ENCODE measurements at regions of chr1 and their contacts with region 1.

Region 1: DNA sequence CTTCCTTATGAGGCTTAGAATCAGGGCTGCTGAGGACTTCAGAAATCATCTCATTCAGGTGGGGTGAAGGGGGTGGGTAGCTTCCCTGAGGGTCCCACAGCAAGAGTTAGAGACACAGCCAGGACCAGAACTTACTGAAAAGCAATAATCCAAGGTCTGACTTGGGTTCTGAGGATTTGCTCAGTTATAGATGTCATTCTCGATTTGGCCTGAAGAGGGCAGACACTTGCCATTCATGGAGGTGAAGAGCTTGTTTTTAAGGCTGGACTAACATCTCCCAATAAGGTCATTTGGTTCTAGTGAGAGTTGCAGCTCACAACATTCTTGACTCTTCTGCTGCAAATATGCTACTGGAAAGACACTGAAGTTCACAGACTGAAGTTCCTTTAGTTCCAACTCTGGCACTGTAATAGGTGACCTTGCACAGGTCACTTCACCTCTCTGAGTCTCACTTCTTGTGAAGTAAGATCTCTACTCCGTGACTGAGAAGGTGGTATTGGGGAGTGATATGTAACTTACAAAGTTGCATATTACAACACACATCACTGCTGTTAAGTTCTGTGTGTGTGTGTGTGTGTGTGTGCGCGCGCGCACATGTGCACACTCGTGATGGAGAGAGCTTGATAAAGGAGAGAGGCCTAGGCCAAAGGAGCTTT is 69.8 kb upstream of the DIRAS3 start:
- DNase-seq: peak; percentile 85
- H3K4me3 ChIP-seq: no peak overlapping the region
- H3K27ac ChIP-seq: no peak overlapping the region
- H3K4me1 ChIP-seq: peaks cover 5% of the 10 kb centered on the region
- H3K27me3 ChIP-seq: no peaks in the 10 kb centered on the region
- CTCF ChIP-seq: peak; percentile 59 to 71
- POLR2A ChIP-seq: peak; percentile 26

Region 2: DNA sequence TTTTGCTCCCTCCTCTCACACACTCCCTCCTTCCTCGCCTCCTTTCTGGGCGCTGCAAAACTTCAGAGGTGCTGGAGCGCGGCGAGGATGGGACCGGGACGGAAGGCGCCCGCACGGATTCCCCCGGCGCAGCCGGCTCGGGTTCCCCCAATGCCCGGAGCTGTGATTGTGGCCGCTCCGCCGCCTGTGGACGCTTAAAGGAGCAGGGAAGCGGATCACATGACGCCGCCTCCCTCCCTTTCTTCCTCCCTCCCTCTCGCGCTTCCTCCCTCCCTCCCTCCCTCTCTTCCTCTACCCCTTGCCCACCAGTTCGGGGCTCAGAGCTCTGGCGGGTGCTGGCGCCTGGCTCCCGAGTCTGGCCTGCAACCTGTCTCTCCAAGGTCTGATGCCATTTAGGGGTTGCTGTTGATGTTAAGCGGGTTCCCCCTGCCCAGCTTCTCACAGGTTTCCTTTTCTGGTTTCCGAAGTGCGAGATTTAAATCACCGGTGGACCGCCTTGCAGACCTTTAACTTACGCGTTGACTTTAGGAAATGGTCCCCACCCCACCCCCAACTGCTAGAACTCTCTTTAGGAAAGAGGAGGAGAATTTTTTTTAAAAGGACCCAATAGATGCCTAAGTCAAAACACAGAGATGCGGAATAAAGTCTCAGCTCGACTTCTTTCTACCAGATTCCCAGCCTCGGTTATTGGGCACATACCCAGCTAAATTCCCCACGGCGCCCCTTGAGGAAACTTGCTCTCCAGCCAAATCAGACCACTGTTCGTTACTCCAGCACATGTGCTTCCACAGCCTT is 112.3 kb after region 1 on chr1 and contains the start of gene WLS:
- CTCF ChIA-PET with region 1: interaction called, 66 read pairs
- POLR2A ChIA-PET with region 1: interaction called, 7 read pairs
- dilution Hi-C with region 1: no loop called
- intact Hi-C with region 1: loop called (anchors 1 kb)
- DNase-seq: peak; percentile 80
- H3K4me3 ChIP-seq: peak within 1 kb of the TSS; percentile 67 to 100 (median 93)
- H3K27ac ChIP-seq: peak within 1 kb of the TSS; percentile 85
- H3K4me1 ChIP-seq: peaks cover 29% of the 10 kb centered on the region
- H3K27me3 ChIP-seq: no peaks in the 10 kb centered on the region
- CTCF ChIP-seq: peak; percentile 5 to 16
- POLR2A ChIP-seq: peak; percentile 98
- total RNA-seq, gene WLS: 163 and 199 TPM in 2 replicates

Region 3: DNA sequence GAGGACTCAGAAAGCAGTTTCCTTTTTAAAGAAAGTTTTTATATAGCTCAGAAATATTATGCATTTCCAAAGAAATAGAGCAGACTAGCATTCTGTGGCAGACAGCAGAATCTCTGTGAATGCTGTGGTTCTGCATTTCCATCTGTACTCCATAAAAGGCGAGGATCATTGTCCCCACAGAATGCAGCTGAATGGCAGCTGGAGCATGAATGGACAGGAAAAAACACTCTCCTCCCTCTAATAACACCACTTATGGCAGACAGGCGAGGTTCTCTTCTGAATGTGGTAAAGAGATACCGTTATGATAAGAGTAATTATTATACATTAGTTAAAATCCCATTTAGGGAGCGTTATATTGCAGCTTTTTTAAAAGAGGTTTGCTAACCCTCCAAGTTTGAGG is 193.5 kb after region 1 on chr1:
- CTCF ChIA-PET with region 1: interaction called, 267 read pairs
- POLR2A ChIA-PET with region 1: no interaction called
- dilution Hi-C with region 1: no loop called
- intact Hi-C with region 1: no loop called
- DNase-seq: peak; percentile 53
- H3K4me3 ChIP-seq: no peak overlapping the region
- H3K27ac ChIP-seq: no peak overlapping the region
- H3K4me1 ChIP-seq: peaks cover 15% of the 10 kb centered on the region
- H3K27me3 ChIP-seq: no peaks in the 10 kb centered on the region
- CTCF ChIP-seq: no peak
- POLR2A ChIP-seq: no peak

Region 4: GRCh38 chr1:68338081-68338480 is 217.8 kb after region 1 on chr1:
- CTCF ChIA-PET with region 1: interaction called, 312 read pairs
- POLR2A ChIA-PET with region 1: interaction called, 5 read pairs
- dilution Hi-C with region 1: loop called (anchors 25 kb)
- intact Hi-C with region 1: loop called (anchors 1 kb)
- DNase-seq: no peak
- H3K4me3 ChIP-seq: no peak overlapping the region
- H3K27ac ChIP-seq: no peak overlapping the region
- H3K4me1 ChIP-seq: no peaks in the 10 kb centered on the region
- H3K27me3 ChIP-seq: no peaks in the 10 kb centered on the region
- CTCF ChIP-seq: no peak
- POLR2A ChIP-seq: no peak

Region 5: GRCh38 chr1:68378296-68379084 is 258.2 kb after region 1 on chr1:
- CTCF ChIA-PET with region 1: interaction called, 19 read pairs
- POLR2A ChIA-PET with region 1: no interaction called
- dilution Hi-C with region 1: no loop called
- intact Hi-C with region 1: no loop called
- DNase-seq: peak; percentile 11
- H3K4me3 ChIP-seq: no peak overlapping the region
- H3K27ac ChIP-seq: peak overlapping the region; percentile 35
- H3K4me1 ChIP-seq: peaks cover 24% of the 10 kb centered on the region
- H3K27me3 ChIP-seq: no peaks in the 10 kb centered on the region
- CTCF ChIP-seq: no peak
- POLR2A ChIP-seq: no peak

Region 6: DNA sequence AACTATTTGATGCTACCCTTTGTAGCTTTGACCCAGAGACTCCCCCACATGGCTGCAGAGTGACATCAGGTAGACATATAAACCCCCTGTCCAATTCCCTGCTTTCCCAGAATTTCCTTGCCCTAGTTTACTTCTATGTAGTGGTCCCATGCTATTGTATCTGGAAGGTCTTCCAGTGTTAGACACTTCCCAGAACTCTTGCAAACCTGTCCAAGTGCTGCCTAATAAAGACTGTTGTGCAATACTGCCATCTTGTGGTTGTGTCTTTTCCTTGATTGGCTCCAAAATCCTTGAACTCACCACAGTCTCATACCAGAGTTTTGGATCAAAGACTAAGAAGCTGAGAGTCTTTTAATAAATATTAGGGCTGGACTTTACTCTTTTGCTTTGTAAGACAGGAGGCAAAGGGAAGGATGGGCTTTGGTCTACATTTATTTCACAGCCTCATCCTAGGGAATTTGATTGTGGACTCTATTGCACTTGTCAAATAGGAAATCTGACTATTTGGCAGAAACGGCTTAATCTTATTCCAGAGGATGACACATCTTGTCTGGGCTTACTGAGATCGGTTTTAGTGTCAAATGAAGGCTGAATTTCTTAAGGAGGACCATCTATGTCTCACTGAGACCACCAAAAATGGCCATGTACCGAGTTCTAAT is 1617.4 kb after region 1 on chr1:
- CTCF ChIA-PET with region 1: interaction called, 13 read pairs
- POLR2A ChIA-PET with region 1: no interaction called
- dilution Hi-C with region 1: no loop called
- intact Hi-C with region 1: no loop called
- DNase-seq: peak; percentile 70
- H3K4me3 ChIP-seq: no peak overlapping the region
- H3K27ac ChIP-seq: no peak overlapping the region
- H3K4me1 ChIP-seq: no peaks in the 10 kb centered on the region
- H3K27me3 ChIP-seq: no peaks in the 10 kb centered on the region
- CTCF ChIP-seq: peak; percentile 59 to 61
- POLR2A ChIP-seq: no peak